Cardiac septum (tissue), 1 donor: ENCODE measurements at regions of chr3 and their contacts with region 1.

Region 1: DNA sequence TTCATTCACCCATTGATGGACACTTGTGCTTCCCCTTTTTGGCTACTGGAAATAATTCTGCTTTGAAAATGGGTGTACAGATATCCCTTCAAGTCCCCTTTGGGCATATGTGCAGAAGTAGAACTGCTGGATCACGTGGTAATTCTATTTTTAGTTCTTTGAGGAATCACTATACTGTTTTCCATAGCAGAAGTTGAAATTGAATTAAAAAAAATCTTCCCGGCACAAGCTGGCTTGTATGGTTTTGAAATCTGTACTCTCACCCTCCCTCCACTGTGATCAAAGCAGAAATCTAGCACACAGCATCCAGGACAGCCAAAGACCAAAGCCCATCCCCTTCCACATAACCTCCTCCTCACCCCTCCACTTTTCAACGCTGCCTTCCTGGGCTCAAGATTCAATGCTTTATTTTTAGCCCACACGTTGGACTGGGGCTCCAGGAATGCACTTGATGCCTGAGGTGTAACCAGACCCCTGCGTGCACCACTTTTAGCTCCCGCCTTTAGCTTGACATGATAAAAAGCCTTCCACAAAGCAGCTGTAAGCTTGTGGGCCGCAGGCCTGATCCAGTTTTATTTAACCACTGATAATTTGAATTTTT is 29.9 kb downstream of the TMEM40 start:
- DNase-seq: no peak

Region 2: DNA sequence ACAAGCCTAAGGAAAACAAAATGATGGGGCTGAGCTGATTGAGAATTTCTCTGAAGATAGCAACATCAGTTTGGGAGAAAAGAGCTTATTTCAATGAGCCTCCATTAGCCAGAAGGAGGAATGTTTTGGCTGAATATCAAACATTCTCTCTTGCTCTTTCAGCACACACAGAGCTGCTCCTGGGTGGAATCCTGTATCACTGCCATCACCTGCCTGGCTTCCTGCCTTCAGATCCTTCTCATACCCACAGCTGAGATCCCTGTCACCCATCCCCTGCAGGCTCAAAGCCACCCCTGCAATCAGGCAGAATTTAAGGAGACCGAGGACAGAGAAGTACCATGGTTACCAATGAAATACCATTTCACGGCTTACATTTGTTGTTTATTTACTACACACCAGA is 752.2 kb before region 1 on chr3:
- intact Hi-C with region 1: no loop called
- DNase-seq: no peak

Region 3: DNA sequence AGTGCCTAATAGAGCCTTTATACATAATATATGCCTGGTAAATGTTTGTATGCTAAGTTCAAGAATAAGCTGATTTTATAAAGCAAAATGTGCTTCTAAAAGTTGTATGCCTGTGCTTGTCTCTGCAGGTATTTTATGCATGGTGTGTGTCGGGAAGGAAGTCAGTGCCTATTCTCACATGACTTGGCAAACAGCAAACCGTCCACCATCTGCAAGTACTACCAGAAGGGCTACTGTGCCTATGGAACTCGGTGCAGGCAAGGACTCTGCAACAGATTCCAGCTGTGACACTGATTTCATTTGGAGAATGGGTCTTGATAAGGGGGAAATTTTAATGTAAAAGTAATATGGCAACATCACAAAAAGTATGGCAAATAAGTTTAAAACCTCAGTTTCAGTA is 160.4 kb before region 1 on chr3:
- intact Hi-C with region 1: no loop called
- DNase-seq: no peak

Region 4: DNA sequence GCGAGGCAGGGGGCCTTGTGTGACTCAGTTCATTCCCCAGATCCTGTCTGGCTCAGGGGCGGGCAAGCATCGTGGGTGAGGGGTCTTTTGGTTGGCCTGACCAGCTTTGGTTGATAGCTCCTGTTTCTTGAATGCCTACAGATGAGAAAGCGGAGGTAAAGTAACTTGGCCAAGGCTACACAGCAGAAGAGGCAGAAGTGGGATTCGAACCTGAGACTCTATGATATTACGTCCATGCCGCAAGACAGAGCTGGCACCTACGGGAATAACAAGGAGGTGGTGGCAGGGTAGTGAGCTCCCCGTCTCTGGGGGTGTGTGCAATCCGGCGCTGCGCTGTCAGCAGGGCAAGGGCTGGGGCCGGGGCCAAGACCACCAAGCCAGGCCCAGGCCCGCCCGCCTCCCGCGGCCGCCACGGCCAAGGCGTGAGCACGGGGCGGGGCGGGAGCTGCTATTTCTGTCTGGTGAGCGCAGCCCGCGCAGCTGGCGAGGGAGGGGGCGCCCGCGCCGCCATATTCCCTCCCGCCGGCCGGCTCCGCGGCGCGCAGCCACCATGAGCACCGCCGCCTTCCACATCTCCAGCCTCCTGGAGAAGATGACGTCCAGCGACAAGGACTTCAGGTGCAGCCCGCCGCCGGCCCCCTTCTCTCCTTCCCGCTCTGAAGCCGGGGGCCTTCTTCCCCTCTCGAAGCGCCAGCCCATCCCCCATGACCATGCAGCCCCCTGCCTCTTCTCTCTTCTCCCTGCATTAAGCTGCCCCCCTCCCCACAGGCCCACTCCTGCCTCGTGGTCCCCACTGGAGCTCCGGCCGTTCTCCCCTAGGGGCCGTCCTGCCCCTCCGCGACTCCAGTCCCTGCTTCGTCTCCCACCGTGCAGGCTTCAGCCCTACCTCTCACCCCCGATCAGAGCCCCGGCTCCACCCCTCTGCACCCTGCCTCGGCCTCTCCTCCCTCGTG is 67.3 kb after region 1 on chr3 and contains the start of gene CAND2:
- intact Hi-C with region 1: loop called (anchors 5 kb)
- DNase-seq: peak; percentile 88
- total RNA-seq, gene CAND2: 62.6 TPM